A549 (cell line): ENCODE measurements at regions of chr5 and their contacts with region 1.

Region 1: DNA sequence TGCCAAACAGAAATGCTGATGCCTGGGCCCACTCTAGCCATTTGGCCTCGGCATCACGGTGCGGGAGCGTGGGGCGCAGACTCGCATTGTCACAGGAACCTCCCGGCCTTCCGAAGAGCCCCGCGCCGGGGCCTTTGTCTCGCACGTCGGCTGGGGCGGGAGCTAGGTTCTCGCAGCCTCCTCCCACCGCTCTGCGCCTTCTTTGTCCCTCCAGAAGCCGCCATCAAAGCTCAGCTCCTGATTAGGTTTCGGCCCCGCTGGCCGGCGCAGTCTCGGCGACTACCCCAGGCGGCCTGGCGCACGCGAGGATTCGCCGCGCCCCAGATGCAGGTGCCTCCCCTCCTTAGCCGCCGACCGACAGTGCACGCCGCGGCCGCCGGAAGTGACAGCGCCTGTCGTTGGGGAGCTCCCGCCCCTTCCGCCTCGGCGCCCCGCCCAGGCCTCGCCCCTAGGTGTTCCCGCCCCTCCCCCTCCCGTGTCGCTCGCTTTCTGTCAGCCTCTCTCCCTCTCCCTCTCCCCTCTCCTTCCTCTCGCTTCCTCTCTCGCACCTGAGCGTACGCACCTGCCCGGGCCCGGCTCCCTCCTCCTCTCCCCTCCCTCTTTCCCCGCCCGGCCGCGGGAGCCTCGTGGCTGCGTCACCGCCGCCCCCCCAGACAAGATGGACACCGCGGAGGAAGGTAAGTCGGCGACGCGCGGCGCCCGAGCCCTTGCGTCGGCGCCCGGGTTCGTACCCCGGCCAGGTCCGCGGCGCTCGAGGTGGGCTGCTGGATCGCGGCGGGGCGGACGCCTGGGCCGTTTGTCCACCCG is at the start of gene MARCHF6:
- DNase-seq: peak; percentile 70 to 93
- ATAC-seq: peak; percentile 91 to 94
- H3K4me3 ChIP-seq: peak within 1 kb of the TSS; percentile 91
- H3K27ac ChIP-seq: peak within 1 kb of the TSS; percentile 97 to 99
- H3K4me1 ChIP-seq: peaks cover 30% of the 10 kb centered on the region
- CTCF ChIP-seq: no peak
- EP300 ChIP-seq: no peak
- POLR2A ChIP-seq: peak; percentile 97
- RAD21 ChIP-seq: 0 out of 5 replicates have a peak, but pooled peaks of 1 of the 2 experiments have one; percentile 10
- polyA plus RNA-seq, gene MARCHF6: 104 and 119 TPM in 2 replicates

Region 2: GRCh38 chr5:10249948-10250803 is 103.3 kb before region 1 on chr5 and contains the start of gene CCT5:
- CTCF ChIA-PET with region 1: interaction called, 4 read pairs
- POLR2A ChIA-PET with region 1: interaction called, 16 read pairs
- DNase-seq: peak; percentile 95 to 99
- ATAC-seq: peak; percentile 86 to 88
- H3K4me3 ChIP-seq: peak within 1 kb of the TSS; percentile 87
- H3K27ac ChIP-seq: peak within 1 kb of the TSS; percentile 88 to 98
- H3K4me1 ChIP-seq: peaks cover 31% of the 10 kb centered on the region
- CTCF ChIP-seq: no peak
- EP300 ChIP-seq: no peak; a peak in 1 of 5 replicates
- POLR2A ChIP-seq: peak; percentile 89
- RAD21 ChIP-seq: no peak
- polyA plus RNA-seq, gene CCT5: 569 and 730 TPM in 2 replicates

Region 3: GRCh38 chr5:10310066-10310779 is 43.2 kb before region 1 on chr5:
- CTCF ChIA-PET with region 1: interaction called, 3 read pairs
- POLR2A ChIA-PET with region 1: interaction called, 10 read pairs
- DNase-seq: peak; percentile 62 to 71
- ATAC-seq: peak; percentile 74 to 78
- H3K4me3 ChIP-seq: no peak overlapping the region
- H3K27ac ChIP-seq: peak overlapping the region; percentile 42 to 73
- H3K4me1 ChIP-seq: peaks cover 24% of the 10 kb centered on the region
- CTCF ChIP-seq: no peak
- EP300 ChIP-seq: no peak
- POLR2A ChIP-seq: no peak
- RAD21 ChIP-seq: no peak

Region 4: DNA sequence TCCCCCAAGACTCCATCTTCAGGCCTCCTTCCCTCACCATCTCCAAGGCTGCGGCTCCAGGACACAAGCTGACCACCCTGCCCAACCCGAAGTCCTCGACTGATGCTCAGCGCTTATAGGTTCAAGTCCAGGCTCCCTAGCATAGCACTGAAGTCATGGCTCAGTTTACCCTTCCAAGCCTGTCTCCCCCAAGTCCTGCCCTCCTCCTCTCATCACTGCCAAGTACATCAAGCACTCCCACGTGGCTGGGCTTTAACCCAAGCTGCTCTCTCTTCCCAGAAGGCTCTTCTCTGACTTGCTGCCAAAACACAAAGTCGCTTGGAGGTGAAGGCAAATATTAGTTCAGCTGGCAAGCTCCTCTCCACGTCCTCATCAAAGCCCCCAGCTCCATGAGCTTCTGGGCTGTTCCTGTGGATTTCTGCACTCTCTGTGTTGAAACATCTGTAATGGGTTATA is 22.1 kb before region 1 on chr5:
- CTCF ChIA-PET with region 1: interaction called, 3 read pairs
- POLR2A ChIA-PET with region 1: interaction called, 19 read pairs
- DNase-seq: peak in 1 of 2 experiments; percentile 56
- ATAC-seq: peak in 1 of 2 experiments; percentile 17; a peak in 1 of 6 replicates
- H3K4me3 ChIP-seq: no peak overlapping the region
- H3K27ac ChIP-seq: no peak overlapping the region
- H3K4me1 ChIP-seq: peaks cover 22% of the 10 kb centered on the region; the same call in 2 of the 3 replicates
- CTCF ChIP-seq: no peak
- EP300 ChIP-seq: no peak
- POLR2A ChIP-seq: no peak
- RAD21 ChIP-seq: no peak

Region 5: GRCh38 chr5:10364186-10364683 is 10.8 kb after region 1 on chr5:
- CTCF ChIA-PET with region 1: interaction called, 8 read pairs
- POLR2A ChIA-PET with region 1: interaction called, 12 read pairs
- DNase-seq: peak in 1 of 2 experiments; percentile 33
- ATAC-seq: peak; percentile 43 to 58; a peak in 4 of 6 replicates
- H3K4me3 ChIP-seq: no peak overlapping the region
- H3K27ac ChIP-seq: no peak overlapping the region
- H3K4me1 ChIP-seq: peaks cover 22% of the 10 kb centered on the region
- CTCF ChIP-seq: peak; percentile 35
- EP300 ChIP-seq: no peak
- POLR2A ChIP-seq: no peak
- RAD21 ChIP-seq: peak; percentile 18 to 29; a peak in 2 of 5 replicates

Region 6: DNA sequence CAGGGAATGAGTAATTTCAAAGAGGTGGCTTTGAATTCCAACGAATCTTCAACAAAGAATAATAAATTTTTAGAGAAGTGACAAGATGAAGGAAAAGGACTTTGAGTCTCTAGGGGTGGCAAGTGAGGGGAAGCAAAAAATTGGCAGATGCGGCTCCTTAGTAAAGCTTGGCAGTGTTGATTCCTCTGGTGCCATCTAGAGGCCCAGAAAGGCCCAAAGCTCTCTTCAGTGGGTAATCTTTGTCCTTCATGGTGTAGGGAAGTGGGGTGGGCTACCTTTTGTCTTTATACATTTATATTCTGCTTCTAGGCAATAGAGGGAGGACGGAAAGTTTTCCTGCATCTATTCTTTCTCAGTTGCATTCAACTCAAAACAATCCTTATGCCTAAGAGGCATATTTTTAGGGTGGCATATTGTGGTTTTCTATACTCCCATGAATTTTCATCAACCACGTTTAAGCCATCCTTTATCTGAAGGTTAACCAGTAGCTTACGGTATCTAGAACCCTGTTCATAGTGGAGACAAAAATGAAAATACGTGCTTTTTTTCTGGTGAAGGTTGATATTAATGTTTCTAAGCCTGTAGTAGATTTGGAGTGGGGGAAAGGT is 70.8 kb after region 1 on chr5:
- CTCF ChIA-PET with region 1: interaction called, 16 read pairs
- POLR2A ChIA-PET with region 1: interaction called, 13 read pairs
- DNase-seq: peak; percentile 46 to 59
- ATAC-seq: peak; percentile 87 to 91
- H3K4me3 ChIP-seq: no peak overlapping the region
- H3K27ac ChIP-seq: no peak overlapping the region
- H3K4me1 ChIP-seq: peaks cover 21% of the 10 kb centered on the region
- CTCF ChIP-seq: peak; percentile 66
- EP300 ChIP-seq: no peak
- POLR2A ChIP-seq: no peak
- RAD21 ChIP-seq: peak; percentile 69